ENCODE measurements at regions of chr6 and their contacts with region 1.

Region 1: GRCh38 chr6:54267798-54268197 is 40.4 kb upstream of the TINAG start:
- DNase-seq: peak; percentile 19
- H3K4me3 ChIP-seq: no peak overlapping the region
- H3K27ac ChIP-seq: no peak overlapping the region
- H3K4me1 ChIP-seq: no peaks in the 10 kb centered on the region
- H3K27me3 ChIP-seq: no peaks in the 10 kb centered on the region
- CTCF ChIP-seq: peak; percentile 58 to 63

Region 2: DNA sequence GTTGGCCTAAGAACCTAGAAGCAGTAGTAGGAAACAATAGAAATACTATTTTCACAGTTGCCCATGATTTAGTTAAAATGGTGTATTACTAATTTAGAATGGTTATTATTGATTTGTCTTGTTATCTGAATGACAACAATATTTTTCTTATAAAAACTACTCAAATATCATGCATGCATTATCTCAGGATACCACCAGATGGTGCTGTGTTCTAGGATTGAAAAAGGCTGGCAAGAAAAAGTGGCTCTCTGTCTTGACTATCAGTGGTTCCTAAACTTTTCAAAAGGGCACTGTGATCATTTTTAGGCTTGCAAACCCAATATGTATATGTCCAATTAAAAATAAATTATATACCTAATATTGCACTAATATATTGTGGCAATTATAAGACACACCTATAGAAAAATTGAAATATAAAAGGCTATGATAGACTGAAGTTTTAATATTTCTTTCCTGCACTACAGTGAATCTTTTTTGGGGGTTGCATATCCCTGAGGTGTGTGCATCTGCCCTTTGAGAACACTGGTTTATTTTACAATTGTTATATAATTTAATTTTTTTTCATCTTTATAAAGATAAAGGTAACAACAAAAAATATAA is 288.2 kb before region 1 on chr6:
- CTCF ChIA-PET with region 1: no interaction called
- dilution Hi-C with region 1: no loop called
- in situ Hi-C with region 1: loop called in 1 of 2 experiments (anchors 25 kb)
- intact Hi-C with region 1: loop called (anchors 1 kb)
- DNase-seq: no peak
- H3K4me3 ChIP-seq: no peak overlapping the region
- H3K27ac ChIP-seq: no peak overlapping the region
- H3K4me1 ChIP-seq: peaks cover 21% of the 10 kb centered on the region
- H3K27me3 ChIP-seq: no peaks in the 10 kb centered on the region
- CTCF ChIP-seq: peak; percentile 79

Region 3: DNA sequence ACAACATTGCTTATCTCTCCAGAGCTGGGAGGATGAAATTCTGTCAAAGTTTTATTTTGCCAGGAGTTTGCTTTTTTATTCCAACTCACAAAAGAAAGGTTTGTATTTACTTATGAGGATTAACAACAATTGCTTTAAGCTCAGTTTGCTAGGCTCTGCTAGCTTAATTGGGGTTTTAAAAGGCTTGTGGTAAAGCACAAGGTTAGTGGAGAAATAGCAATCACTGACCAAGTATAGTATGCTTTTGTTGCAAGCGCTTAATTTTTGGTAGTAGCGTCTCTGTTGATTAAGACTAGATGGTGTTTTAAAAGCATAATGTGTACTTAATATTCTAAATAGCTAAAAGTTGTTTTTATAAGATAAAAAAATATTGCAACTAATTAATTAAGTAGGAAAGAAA is 86.2 kb after region 1 on chr6:
- CTCF ChIA-PET with region 1: no interaction called
- dilution Hi-C with region 1: no loop called
- in situ Hi-C with region 1: no loop called
- intact Hi-C with region 1: loop called (anchors 5 kb)
- DNase-seq: no peak
- H3K4me3 ChIP-seq: no peak overlapping the region
- H3K27ac ChIP-seq: no peak overlapping the region
- H3K4me1 ChIP-seq: no peaks in the 10 kb centered on the region
- H3K27me3 ChIP-seq: no peaks in the 10 kb centered on the region
- CTCF ChIP-seq: no peak